ENCODE measurements at regions of chr6 and their contacts with region 1.

Region 1: GRCh38 chr6:124870611-124871459 is 91.4 kb upstream of the RNF217 start:
- DNase-seq: peak; percentile 7
- H3K4me3 Mint-ChIP-seq: no peak overlapping the region
- H3K27ac Mint-ChIP-seq: no peak overlapping the region
- H3K4me1 Mint-ChIP-seq: no peaks in the 10 kb centered on the region
- H3K27me3 Mint-ChIP-seq: no peaks in the 10 kb centered on the region
- CTCF ChIP-seq: peak; percentile 30

Region 2: DNA sequence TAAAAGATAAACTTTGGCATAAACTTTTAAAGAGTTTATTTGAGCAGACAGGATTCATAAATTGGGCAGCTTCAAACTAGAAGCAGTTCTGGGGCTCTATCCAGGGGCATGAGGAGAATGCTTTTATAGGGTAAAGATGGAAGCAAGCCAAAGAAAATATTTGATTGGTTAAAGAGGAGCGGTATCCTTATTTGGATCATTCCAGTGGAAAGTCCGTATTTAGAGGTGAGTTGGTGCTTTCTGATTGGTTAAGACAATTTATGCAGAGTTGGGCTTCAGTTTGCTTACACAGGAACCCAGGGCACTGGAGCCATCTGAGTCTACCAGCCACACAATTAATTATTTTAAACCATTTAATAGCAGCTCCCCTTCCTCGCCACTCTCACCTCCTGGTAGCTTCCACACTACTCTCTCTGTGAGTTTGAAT is 53.5 kb after region 1 on chr6:
- CTCF ChIA-PET with region 1: no interaction called
- intact Hi-C with region 1: no loop called
- DNase-seq: no peak
- H3K4me3 Mint-ChIP-seq: no peak overlapping the region
- H3K27ac Mint-ChIP-seq: no peak overlapping the region
- H3K4me1 Mint-ChIP-seq: peaks cover 7% of the 10 kb centered on the region
- H3K27me3 Mint-ChIP-seq: no peaks in the 10 kb centered on the region
- CTCF ChIP-seq: no peak

Region 3: DNA sequence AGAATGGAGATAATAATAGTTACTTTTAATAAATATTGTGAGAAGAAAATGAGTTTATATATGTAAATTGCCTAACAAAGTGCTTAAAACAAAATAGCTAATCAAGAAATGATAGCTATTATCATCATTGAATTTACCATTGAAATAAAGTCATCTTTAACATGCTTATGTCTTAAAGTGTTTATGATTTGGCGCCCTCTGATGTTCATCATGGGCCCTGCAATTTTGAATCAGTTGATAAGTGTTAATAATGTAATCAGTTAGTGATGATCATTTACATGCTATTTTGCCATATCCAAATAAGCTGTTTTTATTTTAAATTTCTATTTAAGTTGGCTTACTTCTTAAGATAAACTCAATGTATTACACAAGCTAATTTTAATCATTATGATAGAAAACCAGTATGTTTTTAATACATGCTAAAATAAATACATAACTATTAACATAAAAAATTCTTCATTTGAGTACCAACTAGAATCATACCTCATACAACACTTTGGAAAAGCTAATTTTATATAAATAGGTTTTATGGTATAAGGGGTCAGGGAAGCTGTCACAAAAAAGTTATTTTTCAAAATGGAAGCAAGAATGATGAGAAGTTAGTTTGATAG is 243.5 kb after region 1 on chr6:
- CTCF ChIA-PET with region 1: interaction called, 16 read pairs
- intact Hi-C with region 1: loop called (anchors 1 kb)
- DNase-seq: peak; percentile 43
- H3K4me3 Mint-ChIP-seq: no peak overlapping the region
- H3K27ac Mint-ChIP-seq: no peak overlapping the region
- H3K4me1 Mint-ChIP-seq: no peaks in the 10 kb centered on the region
- H3K27me3 Mint-ChIP-seq: no peaks in the 10 kb centered on the region
- CTCF ChIP-seq: peak; percentile 44

Region 4: GRCh38 chr6:125307150-125307838 is 436.5 kb after region 1 on chr6:
- CTCF ChIA-PET with region 1: no interaction called
- intact Hi-C with region 1: loop called (anchors 5 kb)
- DNase-seq: peak; percentile 18
- H3K4me3 Mint-ChIP-seq: no peak overlapping the region
- H3K27ac Mint-ChIP-seq: no peak overlapping the region
- H3K4me1 Mint-ChIP-seq: peaks cover 23% of the 10 kb centered on the region
- H3K27me3 Mint-ChIP-seq: no peaks in the 10 kb centered on the region
- CTCF ChIP-seq: no peak

Measured in Calu3 (cell line).